Gastrocnemius medialis (tissue), 4 donors: ENCODE measurements at regions of chr15 and their contacts with region 1.

Region 1: GRCh38 chr15:63019539-63020109 is 22.9 kb upstream of the TPM1 start:
- DNase-seq: peak; percentile 81 to 93
- ATAC-seq: peak; percentile 91 to 92
- H3K4me3 ChIP-seq: no peak overlapping the region
- H3K27ac ChIP-seq: peak overlapping the region; percentile 75 to 82 (median 77)
- H3K4me1 ChIP-seq: peaks cover 17 to 21% of the 10 kb centered on the region in 2 donors
- H3K27me3 ChIP-seq: no peaks in the 10 kb centered on the region
- CTCF ChIP-seq: no peak
- POLR2A ChIP-seq: no peak

Region 2: DNA sequence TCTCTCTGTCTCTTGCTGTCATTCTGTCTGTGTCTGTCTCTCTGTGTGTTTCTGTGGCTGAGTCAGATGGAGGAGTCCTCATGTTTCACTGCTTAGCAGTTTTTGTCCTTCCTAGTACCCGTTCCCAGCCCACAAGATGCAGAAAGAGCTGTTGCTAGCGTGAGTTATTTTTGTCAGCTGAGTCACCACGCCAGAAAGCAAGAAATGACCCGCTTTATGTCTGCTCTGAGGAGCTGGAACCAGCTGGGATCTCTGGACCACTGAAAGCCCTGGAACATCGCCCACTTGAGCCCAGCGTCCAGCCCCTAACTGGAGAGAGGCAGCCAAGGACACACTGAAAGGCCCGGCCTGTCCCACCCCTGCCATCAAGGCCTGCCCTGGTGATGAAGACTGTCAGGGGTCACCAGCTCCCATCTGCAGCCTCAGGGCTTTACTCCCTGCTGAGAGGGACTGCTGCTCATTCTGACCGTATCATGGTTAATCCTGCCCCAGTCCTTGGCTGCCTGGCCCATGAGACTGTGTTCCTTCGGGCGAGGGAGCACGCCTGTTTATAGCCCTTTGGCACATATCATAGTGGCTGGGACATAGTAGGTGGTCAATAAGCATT is 78.8 kb before region 1 on chr15:
- in situ Hi-C with region 1: no loop called
- intact Hi-C with region 1: loop called (anchors 2 kb)
- DNase-seq: peak; percentile 87 to 89
- ATAC-seq: peak; percentile 98
- H3K4me3 ChIP-seq: no peak overlapping the region
- H3K27ac ChIP-seq: peak overlapping the region; percentile 84 to 96 (median 86)
- H3K4me1 ChIP-seq: peaks cover 21 to 36% of the 10 kb centered on the region in 2 donors
- H3K27me3 ChIP-seq: no peaks in the 10 kb centered on the region
- CTCF ChIP-seq: no peak
- POLR2A ChIP-seq: no peak

Region 3: GRCh38 chr15:62972814-62973213 is 46.8 kb before region 1 on chr15:
- in situ Hi-C with region 1: no loop called
- intact Hi-C with region 1: no loop called
- DNase-seq: no peak
- ATAC-seq: no peak
- H3K4me3 ChIP-seq: no peak overlapping the region
- H3K27ac ChIP-seq: no peak overlapping the region
- H3K4me1 ChIP-seq: peaks cover 0 to 2% of the 10 kb centered on the region in 2 donors
- H3K27me3 ChIP-seq: no peaks in the 10 kb centered on the region
- CTCF ChIP-seq: no peak
- POLR2A ChIP-seq: no peak

Region 4: GRCh38 chr15:63035977-63036376 is 16.4 kb after region 1 on chr15:
- in situ Hi-C with region 1: no loop called
- intact Hi-C with region 1: loop called (anchors 1 kb)
- DNase-seq: no peak
- ATAC-seq: peak in 1 of 2 donors; percentile 75
- H3K4me3 ChIP-seq: no peak overlapping the region
- H3K27ac ChIP-seq: peak overlapping the region; percentile 70 to 94 (median 77)
- H3K4me1 ChIP-seq: peaks cover 16 to 25% of the 10 kb centered on the region in 2 donors
- H3K27me3 ChIP-seq: no peaks in the 10 kb centered on the region
- CTCF ChIP-seq: no peak
- POLR2A ChIP-seq: no peak